ENCODE measurements at regions of chr9 and their contacts with region 1.

Region 1: GRCh38 chr9:4164356-4164755 is 135.5 kb downstream of the GLIS3 start:
- DNase-seq: no peak
- ATAC-seq: no peak
- H3K4me3 ChIP-seq: no peak overlapping the region
- H3K27ac ChIP-seq: no peak overlapping the region
- H3K4me1 ChIP-seq: no peaks in the 10 kb centered on the region
- H3K27me3 ChIP-seq: no peaks in the 10 kb centered on the region
- CTCF ChIP-seq: no peak

Region 2: DNA sequence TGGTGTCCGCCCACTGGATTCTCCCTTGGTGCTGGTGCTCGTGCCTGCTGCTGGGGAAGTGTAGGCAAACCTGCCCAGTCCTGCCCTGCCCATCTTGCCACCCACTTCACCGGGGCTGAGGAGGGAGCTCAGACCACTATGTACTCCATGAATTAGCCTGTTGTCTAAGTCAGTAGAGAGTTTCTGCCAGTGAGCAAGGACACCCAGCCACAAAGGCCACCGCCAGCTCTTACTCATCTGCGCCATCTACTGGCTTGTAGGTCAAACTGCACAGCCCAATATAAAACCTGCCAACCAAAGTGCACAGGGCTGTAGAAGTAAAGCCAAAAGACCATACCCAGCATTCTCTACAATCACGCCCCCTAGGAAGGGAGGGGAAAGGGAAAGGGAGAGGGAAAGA is 33.2 kb after region 1 on chr9:
- intact Hi-C with region 1: loop called in 1 of 3 experiments (anchors 5 kb)
- DNase-seq: no peak
- ATAC-seq: no peak
- H3K4me3 ChIP-seq: no peak overlapping the region
- H3K27ac ChIP-seq: no peak overlapping the region
- H3K4me1 ChIP-seq: no peaks in the 10 kb centered on the region
- H3K27me3 ChIP-seq: no peaks in the 10 kb centered on the region
- CTCF ChIP-seq: no peak

Region 3: DNA sequence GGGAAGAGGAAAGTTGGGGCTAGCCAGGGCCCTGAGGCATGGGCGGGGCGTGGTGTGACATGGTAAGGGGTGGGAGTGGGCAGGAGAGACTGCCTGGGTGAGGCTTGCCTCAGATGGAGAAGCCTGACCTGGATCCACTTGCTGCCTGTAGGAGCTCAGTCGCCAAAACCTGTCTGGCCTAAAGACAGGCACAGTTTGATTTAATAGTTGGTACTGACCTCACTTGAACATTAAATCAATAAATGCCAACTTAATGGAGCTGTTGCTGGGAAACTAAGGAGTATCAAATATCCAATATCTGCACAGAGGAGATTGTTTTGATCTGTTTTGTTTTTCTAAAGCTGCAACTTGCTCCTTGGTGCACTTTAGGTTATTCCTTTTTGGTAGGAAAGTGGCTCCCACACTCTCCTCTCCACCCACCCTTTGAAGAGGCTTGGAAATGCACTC is 714.8 kb after region 1 on chr9:
- intact Hi-C with region 1: no loop called
- DNase-seq: no peak
- ATAC-seq: peak in 2 of 4 donors; percentile 35 to 66
- H3K4me3 ChIP-seq: no peak overlapping the region
- H3K27ac ChIP-seq: no peak overlapping the region
- H3K4me1 ChIP-seq: no peaks in the 10 kb centered on the region
- H3K27me3 ChIP-seq: no peaks in the 10 kb centered on the region
- CTCF ChIP-seq: no peak